CD8-positive, alpha-beta T cell (primary cell): ENCODE measurements at regions of chr4 and their contacts with region 1.

Region 1: DNA sequence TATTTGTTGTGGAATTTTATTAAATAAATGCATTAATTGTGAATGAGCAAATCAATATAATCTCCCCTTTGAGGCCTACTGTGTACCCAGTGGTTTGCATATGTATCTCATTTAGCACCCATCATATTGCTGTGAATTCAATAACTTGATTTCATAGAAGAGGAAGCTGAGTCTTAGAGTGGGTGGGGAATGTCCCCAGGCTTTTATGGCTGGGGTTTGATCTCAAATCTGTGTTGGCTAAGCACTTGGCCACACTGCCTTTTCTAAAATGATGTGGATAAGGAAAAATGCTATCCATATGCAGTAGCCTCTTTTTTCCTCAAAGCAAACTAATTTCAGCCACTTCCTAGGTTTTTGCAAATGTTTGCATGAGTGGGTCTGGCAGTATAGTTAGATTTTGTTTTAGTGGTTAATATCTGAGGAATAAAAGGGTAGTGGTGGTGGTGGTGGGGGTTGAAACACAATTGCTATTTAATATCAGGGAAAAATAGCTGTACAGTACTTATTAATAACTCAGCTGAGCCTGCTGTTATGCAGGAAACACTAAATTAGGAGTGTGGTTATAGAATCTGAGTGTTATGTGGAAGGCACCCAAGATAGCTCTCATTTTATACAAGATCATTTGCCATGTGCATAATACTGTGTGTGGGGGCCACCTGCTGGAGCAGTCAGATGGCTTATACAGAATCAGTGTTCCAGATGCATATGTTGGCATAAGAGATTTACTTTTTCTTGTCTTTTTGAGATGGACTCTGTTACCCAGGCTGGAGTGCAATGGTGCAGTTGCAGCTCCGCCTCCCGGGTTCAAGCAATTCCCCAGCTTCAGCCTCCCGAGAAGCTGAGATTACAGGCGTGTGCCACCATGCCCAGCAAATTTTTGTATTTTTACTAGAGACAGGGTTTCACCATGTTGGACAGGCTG is 108.0 kb downstream of the TMEM131L start:
- DNase-seq: peak; percentile 29 to 84 (median 73)
- ATAC-seq: peak; percentile 96
- H3K4me3 ChIP-seq: no peak overlapping the region
- H3K4me3 Mint-ChIP-seq: peak overlapping the region; percentile 9
- H3K27ac ChIP-seq: peak overlapping the region in 1 of 2 experiments; percentile 29
- H3K27ac Mint-ChIP-seq: peak overlapping the region; percentile 81
- H3K4me1 ChIP-seq: peaks cover 27% of the 10 kb centered on the region
- H3K4me1 Mint-ChIP-seq: peaks cover 61% of the 10 kb centered on the region
- H3K27me3 ChIP-seq: no peaks in the 10 kb centered on the region
- H3K27me3 Mint-ChIP-seq: no peaks in the 10 kb centered on the region
- CTCF ChIP-seq: peak; percentile 73

Region 2: GRCh38 chr4:152106113-152106763 is 1467.9 kb before region 1 on chr4:
- CTCF ChIA-PET with region 1: no interaction called
- POLR2A ChIA-PET with region 1: no interaction called
- intact Hi-C with region 1: no loop called
- DNase-seq: peak in 2 of 9 experiments; percentile 28 to 46
- ATAC-seq: no peak
- H3K4me3 ChIP-seq: no peak overlapping the region
- H3K4me3 Mint-ChIP-seq: peak overlapping the region; percentile 20
- H3K27ac ChIP-seq: no peak overlapping the region
- H3K27ac Mint-ChIP-seq: peak overlapping the region; percentile 99
- H3K4me1 ChIP-seq: peaks cover 97% of the 10 kb centered on the region
- H3K4me1 Mint-ChIP-seq: peaks cover 96% of the 10 kb centered on the region
- H3K27me3 ChIP-seq: no peaks in the 10 kb centered on the region
- H3K27me3 Mint-ChIP-seq: no peaks in the 10 kb centered on the region
- CTCF ChIP-seq: no peak

Region 3: DNA sequence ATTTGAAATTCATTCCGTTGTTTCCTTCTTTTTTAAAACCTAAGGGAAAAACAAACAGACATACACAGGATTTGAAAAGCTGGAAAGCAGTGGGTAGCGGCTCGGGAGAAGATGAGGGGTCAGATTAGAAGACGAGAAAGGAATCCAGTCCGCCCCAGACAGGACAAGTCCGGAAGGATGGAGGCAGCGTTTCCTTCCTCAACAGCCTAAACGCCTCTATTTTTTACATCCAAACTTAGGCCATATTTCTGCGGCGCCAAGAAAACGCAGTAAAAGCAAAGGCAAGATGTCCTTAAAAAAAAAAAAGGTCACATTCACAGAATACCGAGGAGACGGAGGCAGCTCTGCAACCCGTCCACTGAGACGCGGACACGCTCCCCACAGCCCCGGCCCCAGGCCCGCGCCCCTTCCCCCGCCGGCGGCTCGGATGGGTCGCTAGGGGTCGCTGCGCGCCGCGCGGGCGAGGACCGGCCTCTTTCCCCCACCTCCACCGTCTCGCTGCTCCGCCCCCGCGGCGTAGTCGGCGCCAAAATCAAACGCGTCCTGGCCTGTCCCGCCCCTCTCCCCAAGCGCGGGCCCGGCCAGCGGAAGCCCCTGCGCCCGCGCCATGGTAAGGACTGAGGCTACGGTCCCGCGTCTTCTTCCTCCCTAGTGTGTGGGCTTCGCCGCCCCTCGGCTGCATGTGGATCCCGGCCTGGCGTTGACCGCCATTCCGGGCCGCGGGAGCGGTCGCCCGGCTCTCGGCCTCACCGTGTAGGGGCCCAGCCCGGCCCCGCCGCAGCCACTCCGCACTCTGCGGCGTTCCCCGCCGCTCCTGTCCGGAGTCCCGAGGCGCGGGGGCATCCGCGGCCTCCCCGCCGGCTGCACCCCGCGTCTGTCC is 229.8 kb before region 1 on chr4 and contains the start of gene MND1:
- CTCF ChIA-PET with region 1: interaction called, 56 read pairs
- POLR2A ChIA-PET with region 1: interaction called, 6 read pairs
- intact Hi-C with region 1: loop called (anchors 1 kb)
- DNase-seq: peak; percentile 77 to 93 (median 89)
- ATAC-seq: peak; percentile 93
- H3K4me3 ChIP-seq: peak within 1 kb of the TSS; percentile 49 to 66
- H3K4me3 Mint-ChIP-seq: peak within 1 kb of the TSS; percentile 87
- H3K27ac ChIP-seq: no peak within 1 kb of the TSS
- H3K27ac Mint-ChIP-seq: peak within 1 kb of the TSS; percentile 58
- H3K4me1 ChIP-seq: no peaks in the 10 kb centered on the region
- H3K4me1 Mint-ChIP-seq: peaks cover 6% of the 10 kb centered on the region
- H3K27me3 ChIP-seq: no peaks in the 10 kb centered on the region
- H3K27me3 Mint-ChIP-seq: no peaks in the 10 kb centered on the region
- CTCF ChIP-seq: peak; percentile 99
- total RNA-seq, gene MND1: not detected

Region 4: DNA sequence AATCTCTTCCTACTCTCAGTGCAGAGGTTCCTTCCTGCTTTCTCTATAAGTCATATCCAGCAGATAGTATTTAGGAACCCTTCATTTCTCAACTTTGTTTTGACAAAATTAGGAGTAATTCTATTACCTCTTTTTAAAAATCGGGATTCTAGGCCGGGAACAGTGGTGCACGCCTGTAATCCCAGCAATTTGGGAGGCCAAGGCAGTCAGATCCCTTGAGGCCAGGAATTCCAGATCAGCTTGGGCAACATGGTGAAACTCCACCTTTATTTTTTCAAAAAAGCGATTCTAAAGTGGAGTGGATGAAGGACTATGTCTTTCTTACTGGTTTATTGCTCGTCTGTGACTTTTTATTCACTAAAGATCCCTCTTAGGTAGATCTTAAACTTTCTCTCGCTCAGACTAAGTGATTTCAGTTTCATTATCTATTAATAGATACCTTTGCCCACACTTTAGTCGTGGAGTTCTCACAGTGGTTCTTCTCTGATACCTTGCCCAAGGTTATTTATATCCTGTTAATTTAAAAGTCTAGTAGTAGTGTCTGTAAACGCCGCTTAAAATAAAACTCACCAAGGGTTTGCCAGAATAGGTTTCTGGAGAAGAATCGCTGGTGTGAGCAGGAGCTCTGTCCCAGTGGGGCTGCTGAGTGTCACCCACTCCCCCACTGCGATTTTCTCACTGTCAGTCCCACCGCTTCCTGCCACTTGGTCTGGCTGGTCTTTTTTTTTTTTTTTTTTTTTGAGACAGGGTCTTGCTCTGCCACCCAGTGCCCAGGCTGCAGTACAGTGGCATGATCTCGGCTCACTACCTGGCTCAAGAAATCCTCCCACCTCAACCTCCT is 135.0 kb before region 1 on chr4:
- CTCF ChIA-PET with region 1: interaction called, 38 read pairs
- POLR2A ChIA-PET with region 1: interaction called, 8 read pairs
- intact Hi-C with region 1: no loop called
- DNase-seq: peak in 7 of 9 experiments; percentile 18 to 75 (median 49)
- ATAC-seq: peak; percentile 74
- H3K4me3 ChIP-seq: peak overlapping the region; percentile 45 to 47
- H3K4me3 Mint-ChIP-seq: peak overlapping the region; percentile 80
- H3K27ac ChIP-seq: peak overlapping the region; percentile 38 to 89
- H3K27ac Mint-ChIP-seq: peak overlapping the region; percentile 88
- H3K4me1 ChIP-seq: peaks cover 31% of the 10 kb centered on the region
- H3K4me1 Mint-ChIP-seq: peaks cover 48% of the 10 kb centered on the region
- H3K27me3 ChIP-seq: no peaks in the 10 kb centered on the region
- H3K27me3 Mint-ChIP-seq: no peaks in the 10 kb centered on the region
- CTCF ChIP-seq: no peak

Region 5: DNA sequence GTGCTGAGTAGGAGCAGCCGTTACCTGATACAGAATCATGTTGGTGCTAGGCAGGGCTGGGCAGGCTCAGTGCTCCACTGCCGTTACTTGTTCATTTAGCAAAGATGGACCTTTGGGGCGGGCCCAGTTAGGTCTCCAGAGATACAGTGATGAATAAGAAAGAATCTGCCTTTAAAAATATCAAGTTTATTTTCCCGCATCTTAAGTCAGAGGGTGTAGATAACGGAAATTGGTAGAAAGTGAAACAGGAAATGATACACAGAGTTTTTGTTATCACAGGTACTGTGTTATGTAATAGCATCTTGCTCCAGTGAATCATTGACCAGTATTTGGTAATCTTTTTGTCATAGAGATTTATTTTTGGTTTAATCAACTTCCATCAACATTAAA is 102.5 kb before region 1 on chr4:
- CTCF ChIA-PET with region 1: interaction called, 36 read pairs
- POLR2A ChIA-PET with region 1: interaction called, 26 read pairs
- intact Hi-C with region 1: loop called (anchors 1 to 10 kb)
- DNase-seq: peak in 5 of 9 experiments; percentile 41 to 80 (median 64)
- ATAC-seq: peak; percentile 60
- H3K4me3 ChIP-seq: peak overlapping the region; percentile 49 to 64
- H3K4me3 Mint-ChIP-seq: peak overlapping the region; percentile 95
- H3K27ac ChIP-seq: peak overlapping the region; percentile 76 to 92
- H3K27ac Mint-ChIP-seq: peak overlapping the region; percentile 96
- H3K4me1 ChIP-seq: peaks cover 51% of the 10 kb centered on the region
- H3K4me1 Mint-ChIP-seq: peaks cover 74% of the 10 kb centered on the region
- H3K27me3 ChIP-seq: no peaks in the 10 kb centered on the region
- H3K27me3 Mint-ChIP-seq: no peaks in the 10 kb centered on the region
- CTCF ChIP-seq: no peak

Region 6: GRCh38 chr4:153521999-153522801 is 51.9 kb before region 1 on chr4:
- CTCF ChIA-PET with region 1: interaction called, 3 read pairs
- POLR2A ChIA-PET with region 1: no interaction called
- intact Hi-C with region 1: loop called in 1 of 2 experiments (anchors 10 kb)
- DNase-seq: peak in 8 of 9 experiments; percentile 37 to 90 (median 66)
- ATAC-seq: peak; percentile 54
- H3K4me3 ChIP-seq: peak overlapping the region; percentile 21 to 28
- H3K4me3 Mint-ChIP-seq: peak overlapping the region; percentile 77
- H3K27ac ChIP-seq: peak overlapping the region; percentile 22 to 75
- H3K27ac Mint-ChIP-seq: peak overlapping the region; percentile 94
- H3K4me1 ChIP-seq: peaks cover 87% of the 10 kb centered on the region
- H3K4me1 Mint-ChIP-seq: peaks cover 91% of the 10 kb centered on the region
- H3K27me3 ChIP-seq: no peaks in the 10 kb centered on the region
- H3K27me3 Mint-ChIP-seq: no peaks in the 10 kb centered on the region
- CTCF ChIP-seq: no peak

Region 7: DNA sequence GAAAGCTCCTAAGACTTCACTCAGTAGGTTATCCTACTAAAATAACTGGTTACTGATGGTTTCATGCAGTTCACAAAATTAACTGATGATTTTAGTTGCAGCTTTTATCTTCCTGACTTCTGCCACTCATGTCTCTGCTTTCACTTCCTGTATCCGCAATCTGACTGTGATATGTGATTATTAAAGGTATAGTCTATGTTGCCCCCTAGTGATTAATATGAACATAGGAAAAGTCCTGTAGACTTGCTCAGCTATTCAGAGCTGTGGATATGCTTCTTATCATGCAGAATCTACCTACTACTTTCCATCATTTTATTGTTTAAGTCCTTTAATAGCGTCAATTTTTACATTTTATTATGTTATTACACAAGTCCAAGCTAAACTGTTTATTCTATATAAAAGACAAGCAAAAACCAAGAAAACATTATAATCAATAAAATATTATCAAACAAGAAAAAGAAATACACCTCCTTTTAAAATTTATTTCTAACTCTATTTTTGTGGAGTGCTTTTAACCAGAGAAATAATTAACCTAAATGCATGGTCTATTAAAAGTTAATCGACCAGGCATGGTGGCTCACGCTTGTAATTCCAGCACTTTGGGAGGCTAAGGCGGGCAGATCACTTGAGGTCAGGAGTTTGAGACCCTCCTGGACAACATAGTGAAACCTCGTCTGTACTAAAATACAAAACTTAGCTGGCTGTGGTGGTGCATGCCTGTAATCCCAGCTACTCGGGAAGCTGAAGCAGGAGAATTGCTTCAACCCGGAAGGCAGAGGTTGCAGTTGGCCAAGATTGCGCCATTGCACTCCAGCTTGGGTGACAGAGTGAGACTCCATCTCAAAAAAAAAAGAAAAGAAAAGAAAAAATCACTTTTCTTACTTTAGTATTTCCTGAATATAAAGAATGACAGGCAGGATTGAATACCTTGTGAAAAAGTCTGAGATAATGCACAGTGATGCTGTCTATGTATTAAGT is 69.6 kb after region 1 on chr4:
- CTCF ChIA-PET with region 1: no interaction called
- POLR2A ChIA-PET with region 1: interaction called, 3 read pairs
- intact Hi-C with region 1: loop called in 1 of 2 experiments (anchors 2 kb)
- DNase-seq: peak in 2 of 9 experiments; percentile 63 to 75
- ATAC-seq: peak; percentile 99
- H3K4me3 ChIP-seq: no peak overlapping the region
- H3K4me3 Mint-ChIP-seq: no peak overlapping the region
- H3K27ac ChIP-seq: no peak overlapping the region
- H3K27ac Mint-ChIP-seq: peak overlapping the region; percentile 49
- H3K4me1 ChIP-seq: no peaks in the 10 kb centered on the region
- H3K4me1 Mint-ChIP-seq: peaks cover 3% of the 10 kb centered on the region
- H3K27me3 ChIP-seq: no peaks in the 10 kb centered on the region
- H3K27me3 Mint-ChIP-seq: no peaks in the 10 kb centered on the region
- CTCF ChIP-seq: peak; percentile 62

Region 8: DNA sequence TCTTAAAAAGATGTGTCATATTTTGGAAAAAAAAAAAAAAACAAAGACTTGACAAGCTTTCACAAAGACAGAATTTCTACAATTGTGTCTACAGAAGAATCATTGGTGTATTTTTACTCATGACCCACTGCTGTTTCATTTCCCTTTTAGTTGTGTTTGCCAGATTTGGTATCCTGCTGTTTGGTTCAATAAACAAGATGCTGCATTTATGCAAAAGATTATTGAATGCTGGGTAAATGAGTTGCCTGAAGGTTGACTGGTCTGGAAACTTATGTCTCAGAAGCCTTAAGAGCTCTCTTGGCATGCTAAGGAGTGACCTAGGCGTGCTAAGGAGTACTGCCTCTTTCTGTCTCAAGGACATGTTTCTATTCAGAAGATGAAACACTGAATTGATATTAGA is 1569.4 kb after region 1 on chr4:
- CTCF ChIA-PET with region 1: no interaction called
- POLR2A ChIA-PET with region 1: no interaction called
- intact Hi-C with region 1: no loop called
- DNase-seq: no peak
- ATAC-seq: no peak
- H3K4me3 ChIP-seq: no peak overlapping the region
- H3K4me3 Mint-ChIP-seq: no peak overlapping the region
- H3K27ac ChIP-seq: no peak overlapping the region
- H3K27ac Mint-ChIP-seq: no peak overlapping the region
- H3K4me1 ChIP-seq: no peaks in the 10 kb centered on the region
- H3K4me1 Mint-ChIP-seq: no peaks in the 10 kb centered on the region
- H3K27me3 ChIP-seq: no peaks in the 10 kb centered on the region
- H3K27me3 Mint-ChIP-seq: no peaks in the 10 kb centered on the region
- CTCF ChIP-seq: no peak